ENCODE measurements at regions of chr5 and their contacts with region 1.

Region 1: DNA sequence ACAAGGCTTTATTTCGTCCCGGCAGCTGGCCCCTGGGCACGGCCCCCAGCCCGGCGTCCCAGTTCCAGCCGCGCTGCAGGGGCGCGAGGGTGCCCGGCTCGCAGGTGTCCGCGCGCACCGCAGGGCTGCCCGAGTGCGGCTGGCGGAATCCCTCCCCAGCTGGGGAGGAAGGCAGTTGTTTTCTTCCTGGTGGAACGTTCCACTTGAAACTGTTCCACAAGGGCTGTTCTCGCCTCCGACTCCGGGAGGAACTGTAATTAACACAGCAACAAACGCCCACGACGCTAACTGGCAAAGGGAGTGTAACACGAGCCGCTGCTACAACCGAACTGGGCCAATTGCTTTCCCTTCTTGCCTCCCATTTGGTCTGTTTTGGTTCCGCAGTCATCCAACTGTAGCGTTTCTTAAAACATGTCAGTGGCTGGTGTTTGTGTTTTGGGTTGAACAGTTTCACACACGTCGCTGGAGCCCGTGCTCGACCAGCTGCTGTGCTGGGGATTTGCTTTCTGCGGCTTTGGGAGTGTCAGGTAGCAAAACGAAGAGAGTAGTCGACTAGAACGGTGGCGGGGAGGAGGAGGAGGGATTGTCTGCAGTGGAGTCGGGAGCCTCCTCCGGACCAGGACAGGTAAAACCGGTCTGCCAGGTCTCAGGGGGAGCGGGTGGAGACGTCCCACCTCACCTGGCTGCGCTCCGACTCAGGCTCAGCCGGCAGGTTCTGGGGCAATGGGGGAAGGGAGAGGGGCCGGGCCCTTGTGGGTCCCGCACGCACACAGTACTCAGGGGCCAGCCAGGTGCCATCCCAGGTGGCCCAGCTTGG is 131.6 kb upstream of the NIPBL start:
- DNase-seq: peak; percentile 93 to 97
- H3K4me3 ChIP-seq: peak overlapping the region; percentile 61
- H3K27ac ChIP-seq: peak overlapping the region; percentile 51
- H3K4me1 ChIP-seq: peaks cover 20% of the 10 kb centered on the region
- H3K27me3 ChIP-seq: no peaks in the 10 kb centered on the region
- CTCF ChIP-seq: peak; percentile 89; the same call in 1 of the 2 replicates

Region 2: DNA sequence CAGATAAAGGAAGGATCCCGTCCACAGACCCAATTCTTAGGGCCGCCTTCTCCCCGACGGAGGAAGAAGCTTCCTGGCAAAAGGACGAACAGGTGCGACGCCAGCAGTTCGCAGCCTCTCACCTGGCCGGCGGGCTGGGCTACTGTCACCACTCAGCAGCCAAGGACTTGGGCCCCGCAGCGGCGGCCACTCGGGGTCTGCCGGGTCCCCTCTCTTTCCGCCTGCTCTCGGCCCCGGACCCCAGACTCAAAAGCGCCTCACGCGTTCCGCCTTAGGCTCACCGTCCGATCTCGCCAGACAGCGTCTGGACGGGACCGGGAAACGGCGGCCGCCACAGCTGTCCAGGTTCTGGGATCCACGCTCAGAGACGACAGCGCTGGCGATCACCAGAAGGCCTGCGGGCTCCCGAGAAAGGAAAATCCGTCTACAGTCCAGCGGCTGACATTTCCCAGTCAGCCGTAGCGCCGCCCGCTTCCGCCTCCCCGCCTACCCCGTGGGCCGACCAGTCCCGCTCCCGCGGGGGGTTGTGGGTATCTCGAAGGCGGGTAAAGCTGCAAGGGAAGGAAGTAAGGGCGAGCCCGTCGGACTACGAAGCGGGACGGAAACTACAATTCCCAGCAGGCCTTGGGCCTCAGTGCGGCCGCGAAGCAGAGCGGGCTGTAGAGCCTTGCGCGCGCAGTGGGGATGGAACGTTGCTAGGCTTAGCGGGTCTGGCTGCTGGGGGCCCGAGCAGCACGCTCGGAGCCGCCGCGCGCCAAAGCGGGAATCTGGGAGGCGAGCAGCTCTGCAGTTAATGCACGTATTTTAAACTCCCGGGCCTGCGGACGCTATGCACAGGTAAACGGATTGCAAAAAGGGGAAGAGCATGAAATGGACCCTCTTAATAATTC is 593.3 kb before region 1 on chr5 and contains the starts of genes LMBRD2 and SKP2:
- CTCF ChIA-PET with region 1: no interaction called
- POLR2A ChIA-PET with region 1: no interaction called
- intact Hi-C with region 1: loop called (anchors 5 kb)
- DNase-seq: peak; percentile 98 to 100
- H3K4me3 ChIP-seq: peak within 1 kb of the TSS; percentile 90
- H3K27ac ChIP-seq: peak within 1 kb of the TSS; percentile 38
- H3K4me1 ChIP-seq: peaks cover 17% of the 10 kb centered on the region
- H3K27me3 ChIP-seq: no peaks in the 10 kb centered on the region
- CTCF ChIP-seq: no peak
- total RNA-seq, gene LMBRD2: 8.5 and 18.0 TPM in 2 replicates
- total RNA-seq, gene SKP2: 121 and 153 TPM in 2 replicates

Region 3: DNA sequence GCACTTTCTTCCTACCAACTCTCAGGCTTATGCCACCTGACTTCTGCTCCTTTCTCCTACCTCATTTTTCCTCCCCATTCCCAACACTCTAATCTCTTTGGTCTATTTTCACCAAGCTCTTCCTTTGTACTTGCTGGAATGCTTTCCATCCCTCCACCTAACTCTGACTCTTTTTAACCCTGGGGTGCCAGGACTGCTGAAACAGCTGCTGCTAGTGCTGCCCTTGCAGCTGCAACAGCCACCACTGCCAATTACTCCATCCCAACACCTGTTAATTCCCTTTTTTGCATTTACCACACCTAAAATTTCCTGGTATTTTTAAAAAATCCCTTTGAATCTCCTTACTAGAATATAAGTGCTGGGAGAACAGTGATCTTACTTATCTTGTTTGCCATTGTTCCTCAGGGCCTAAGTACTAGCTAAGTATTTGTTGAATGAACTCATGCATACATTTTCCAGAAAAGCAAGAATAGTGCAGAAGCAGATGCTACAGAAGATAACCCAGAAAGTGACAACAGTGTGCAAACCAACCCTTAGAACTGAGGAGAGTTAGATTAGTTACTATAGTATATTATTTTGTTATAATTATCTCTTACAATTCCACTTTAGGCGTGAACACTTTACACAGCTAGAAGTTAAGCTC is 514.7 kb before region 1 on chr5:
- CTCF ChIA-PET with region 1: no interaction called
- POLR2A ChIA-PET with region 1: interaction called, 11 read pairs
- intact Hi-C with region 1: no loop called
- DNase-seq: peak in 1 of 2 experiments; percentile 33
- H3K4me3 ChIP-seq: no peak overlapping the region
- H3K27ac ChIP-seq: no peak overlapping the region
- H3K4me1 ChIP-seq: peaks cover 19% of the 10 kb centered on the region
- H3K27me3 ChIP-seq: no peaks in the 10 kb centered on the region
- CTCF ChIP-seq: no peak

Region 4: DNA sequence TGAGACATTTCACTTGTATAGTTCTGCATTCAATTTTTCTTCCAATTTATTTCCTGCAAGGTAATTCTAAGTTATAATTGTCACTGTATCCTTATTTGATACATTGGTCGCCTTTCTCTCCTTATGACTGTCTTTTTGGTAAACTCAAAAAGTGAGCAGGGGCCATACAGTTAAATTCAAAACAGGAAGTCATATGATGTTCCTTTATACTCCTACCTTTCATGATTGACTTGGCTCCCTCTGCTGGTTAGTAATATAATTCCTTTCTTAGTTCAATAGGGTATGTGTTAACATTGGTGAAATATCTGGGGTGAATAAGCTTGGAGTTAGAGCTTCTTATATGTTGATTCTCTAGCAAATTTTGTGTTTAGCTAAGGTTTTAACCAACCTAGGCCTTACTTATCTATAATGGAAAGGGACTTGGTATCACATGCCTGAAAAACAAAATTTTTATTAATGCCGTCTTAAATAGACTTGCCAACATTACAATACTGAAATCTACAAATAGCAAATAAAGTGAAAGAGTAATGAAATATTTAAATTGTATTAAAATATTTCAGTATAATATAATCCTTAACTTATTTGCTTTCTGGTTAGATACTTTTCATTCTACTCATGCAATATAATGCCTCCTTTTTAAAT is 125.5 kb after region 1 on chr5:
- CTCF ChIA-PET with region 1: interaction called, 10 read pairs
- POLR2A ChIA-PET with region 1: interaction called, 7 read pairs
- intact Hi-C with region 1: loop called (anchors 1 kb)
- DNase-seq: peak in 1 of 2 experiments; percentile 71
- H3K4me3 ChIP-seq: no peak overlapping the region
- H3K27ac ChIP-seq: no peak overlapping the region
- H3K4me1 ChIP-seq: peaks cover 25% of the 10 kb centered on the region
- H3K27me3 ChIP-seq: no peaks in the 10 kb centered on the region
- CTCF ChIP-seq: peak; percentile 86

Region 5: GRCh38 chr5:36928947-36929346 is 184.0 kb after region 1 on chr5:
- CTCF ChIA-PET with region 1: no interaction called
- POLR2A ChIA-PET with region 1: no interaction called
- intact Hi-C with region 1: loop called (anchors 5 kb)
- DNase-seq: peak in 1 of 2 experiments; percentile 80
- H3K4me3 ChIP-seq: no peak overlapping the region
- H3K27ac ChIP-seq: peak overlapping the region; percentile 69
- H3K4me1 ChIP-seq: peaks cover 18% of the 10 kb centered on the region
- H3K27me3 ChIP-seq: no peaks in the 10 kb centered on the region
- CTCF ChIP-seq: no peak

Region 6: GRCh38 chr5:36944607-36945225 is 199.7 kb after region 1 on chr5:
- CTCF ChIA-PET with region 1: no interaction called
- POLR2A ChIA-PET with region 1: no interaction called
- intact Hi-C with region 1: loop called (anchors 1 kb)
- DNase-seq: peak in 1 of 2 experiments; percentile 67
- H3K4me3 ChIP-seq: no peak overlapping the region
- H3K27ac ChIP-seq: no peak overlapping the region
- H3K4me1 ChIP-seq: peaks cover 7% of the 10 kb centered on the region
- H3K27me3 ChIP-seq: no peaks in the 10 kb centered on the region
- CTCF ChIP-seq: peak; percentile 91

Region 7: GRCh38 chr5:37005946-37006540 is 261.1 kb after region 1 on chr5:
- CTCF ChIA-PET with region 1: interaction called, 4 read pairs
- POLR2A ChIA-PET with region 1: no interaction called
- intact Hi-C with region 1: loop called (anchors 2 kb)
- DNase-seq: peak in 1 of 2 experiments; percentile 53
- H3K4me3 ChIP-seq: no peak overlapping the region
- H3K27ac ChIP-seq: no peak overlapping the region
- H3K4me1 ChIP-seq: no peaks in the 10 kb centered on the region
- H3K27me3 ChIP-seq: no peaks in the 10 kb centered on the region
- CTCF ChIP-seq: peak; percentile 77